Activated CD4-positive, alpha-beta memory T cell treated with anti-CD3 and anti-CD28 coated beads for 36 hours (primary cell): ENCODE measurements at regions of chr6 and their contacts with region 1.

Region 1: GRCh38 chr6:41027799-41028628 is 11.0 kb downstream of the UNC5CL start:
- DNase-seq: peak; percentile 83
- H3K4me3 Mint-ChIP-seq: peak overlapping the region; percentile 72
- H3K27ac Mint-ChIP-seq: peak overlapping the region; percentile 20
- H3K4me1 Mint-ChIP-seq: peaks cover 17% of the 10 kb centered on the region
- H3K27me3 Mint-ChIP-seq: no peaks in the 10 kb centered on the region

Region 2: DNA sequence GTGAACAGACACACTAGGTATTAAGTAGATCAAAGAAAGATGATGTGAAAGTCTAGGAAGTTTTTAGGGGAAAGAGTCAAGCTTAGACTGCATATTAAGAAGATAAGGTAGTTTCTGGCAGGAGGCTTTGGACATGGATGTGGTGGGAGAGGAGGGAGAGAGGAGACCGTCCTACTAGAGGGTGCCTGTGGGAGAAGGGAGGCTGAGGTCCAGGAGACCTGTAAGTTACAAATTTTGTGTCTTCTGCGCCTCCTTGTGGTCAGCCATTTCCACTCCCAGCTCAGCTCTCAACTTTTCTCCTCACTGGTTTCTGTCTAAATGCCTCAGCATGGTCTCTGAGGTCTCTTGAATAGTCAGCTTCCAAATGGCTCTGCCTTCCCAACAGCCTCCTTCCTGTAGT is 182.5 kb before region 1 on chr6:
- CTCF ChIA-PET with region 1: no interaction called
- POLR2A ChIA-PET with region 1: no interaction called
- intact Hi-C with region 1: no loop called
- DNase-seq: peak; percentile 38
- H3K4me3 Mint-ChIP-seq: no peak overlapping the region
- H3K27ac Mint-ChIP-seq: no peak overlapping the region
- H3K4me1 Mint-ChIP-seq: no peaks in the 10 kb centered on the region
- H3K27me3 Mint-ChIP-seq: peaks cover 12% of the 10 kb centered on the region

Region 3: GRCh38 chr6:40999569-40999968 is 28.4 kb before region 1 on chr6:
- CTCF ChIA-PET with region 1: interaction called, 16 read pairs
- POLR2A ChIA-PET with region 1: no interaction called
- intact Hi-C with region 1: no loop called
- DNase-seq: peak; percentile 17
- H3K4me3 Mint-ChIP-seq: no peak overlapping the region
- H3K27ac Mint-ChIP-seq: no peak overlapping the region
- H3K4me1 Mint-ChIP-seq: no peaks in the 10 kb centered on the region
- H3K27me3 Mint-ChIP-seq: peaks cover 21% of the 10 kb centered on the region

Region 4: GRCh38 chr6:41013466-41014153 is 14.4 kb before region 1 on chr6:
- CTCF ChIA-PET with region 1: interaction called, 25 read pairs
- POLR2A ChIA-PET with region 1: no interaction called
- intact Hi-C with region 1: no loop called
- DNase-seq: no peak
- H3K4me3 Mint-ChIP-seq: no peak overlapping the region
- H3K27ac Mint-ChIP-seq: no peak overlapping the region
- H3K4me1 Mint-ChIP-seq: no peaks in the 10 kb centered on the region
- H3K27me3 Mint-ChIP-seq: peaks cover 1% of the 10 kb centered on the region

Region 5: DNA sequence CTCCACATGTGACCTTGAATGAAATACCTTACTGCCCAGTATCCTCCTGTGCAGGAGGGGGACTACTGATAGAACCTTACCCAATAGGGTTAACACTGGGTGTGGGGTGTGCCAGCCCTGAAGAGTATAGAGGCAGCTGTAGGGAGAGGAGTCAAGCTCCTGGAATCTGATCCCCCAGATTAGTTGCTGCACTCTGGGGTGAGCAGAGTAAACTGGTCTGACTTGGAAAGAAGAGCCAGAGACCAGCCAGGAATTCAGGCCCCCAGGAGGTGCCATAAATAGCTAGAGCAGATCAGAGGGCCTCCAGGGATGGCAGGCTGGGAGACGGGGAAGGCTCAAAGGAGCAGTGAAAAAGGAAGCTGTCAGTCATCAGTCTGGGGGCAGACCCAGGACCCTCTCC is 21.5 kb after region 1 on chr6:
- CTCF ChIA-PET with region 1: interaction called, 24 read pairs
- POLR2A ChIA-PET with region 1: no interaction called
- intact Hi-C with region 1: no loop called
- DNase-seq: no peak
- H3K4me3 Mint-ChIP-seq: no peak overlapping the region
- H3K27ac Mint-ChIP-seq: no peak overlapping the region
- H3K4me1 Mint-ChIP-seq: peaks cover 13% of the 10 kb centered on the region
- H3K27me3 Mint-ChIP-seq: no peaks in the 10 kb centered on the region

Region 6: GRCh38 chr6:41072676-41073623 is 44.9 kb after region 1 on chr6 and contains the start of gene NFYA:
- CTCF ChIA-PET with region 1: interaction called, 14 read pairs
- POLR2A ChIA-PET with region 1: no interaction called
- intact Hi-C with region 1: loop called (anchors 1 kb)
- DNase-seq: peak; percentile 100
- H3K4me3 Mint-ChIP-seq: peak within 1 kb of the TSS; percentile 93
- H3K27ac Mint-ChIP-seq: peak within 1 kb of the TSS; percentile 98
- H3K4me1 Mint-ChIP-seq: peaks cover 52% of the 10 kb centered on the region
- H3K27me3 Mint-ChIP-seq: no peaks in the 10 kb centered on the region
- total RNA-seq, gene NFYA: 30.2 to 30.4 TPM